Natural killer cell (primary cell): ENCODE measurements at regions of chr16 and their contacts with region 1.

Region 1: GRCh38 chr16:89490387-89491237 is at the start of gene ANKRD11:
- DNase-seq: peak; percentile 98 to 100
- ATAC-seq: peak; percentile 84 to 95 (median 86)
- H3K4me3 ChIP-seq: peak within 1 kb of the TSS; percentile 51
- H3K4me3 Mint-ChIP-seq: peak within 1 kb of the TSS; percentile 95
- H3K27ac ChIP-seq: peak within 1 kb of the TSS; percentile 78
- H3K27ac Mint-ChIP-seq: peak within 1 kb of the TSS; percentile 97 to 98
- H3K4me1 ChIP-seq: peaks cover 42% of the 10 kb centered on the region
- H3K4me1 Mint-ChIP-seq: peaks cover 41 to 72% of the 10 kb centered on the region in 2 donors
- H3K27me3 ChIP-seq: no peaks in the 10 kb centered on the region
- H3K27me3 Mint-ChIP-seq: no peaks in the 10 kb centered on the region
- CTCF ChIP-seq: no peak
- total RNA-seq, gene ANKRD11: 230 to 299 (median 287) TPM

Region 2: DNA sequence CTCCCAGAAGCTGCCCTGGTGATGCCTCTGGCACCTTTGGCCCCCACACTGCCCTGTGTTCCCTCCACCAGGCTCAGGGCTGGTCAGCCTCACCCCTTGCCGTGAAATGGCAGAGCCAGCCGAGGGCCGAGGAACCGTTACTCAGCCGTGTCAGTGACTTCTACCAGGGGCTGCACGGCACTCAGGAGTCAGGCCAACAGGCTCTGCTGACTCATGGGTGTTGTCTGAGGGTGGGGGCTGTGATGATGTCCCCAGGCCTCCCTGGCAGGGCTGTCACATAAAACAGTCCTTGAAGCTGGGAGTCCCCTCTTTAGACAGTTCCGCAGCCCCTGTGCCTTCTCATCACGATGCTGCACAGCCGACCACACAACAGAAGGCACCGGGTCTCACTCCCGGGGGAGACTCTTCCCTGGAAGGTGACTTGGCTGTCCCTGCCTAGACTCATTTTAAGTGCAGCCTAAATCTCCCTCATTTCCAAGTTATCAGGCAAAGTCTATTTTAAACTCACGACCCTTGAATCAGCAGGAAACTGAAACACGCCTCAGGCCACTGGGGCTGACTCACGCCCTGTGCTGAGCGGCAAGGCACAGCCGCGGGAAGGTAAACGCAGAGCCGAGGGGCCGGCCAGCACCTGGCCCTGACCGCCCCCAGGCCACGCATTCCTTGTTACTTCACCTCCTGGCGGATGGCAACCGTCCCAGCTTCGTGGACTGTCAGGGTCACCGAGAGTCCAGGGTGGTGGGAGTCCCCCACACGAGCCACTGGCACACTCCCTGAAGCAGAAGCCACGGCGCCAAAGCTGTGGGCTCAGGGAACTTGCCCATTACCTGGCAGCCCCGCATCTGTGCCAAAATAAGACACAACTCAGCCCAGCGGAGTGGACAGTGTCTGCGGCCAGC is 170.5 kb before region 1 on chr16:
- intact Hi-C with region 1: loop called (anchors 2 kb)
- DNase-seq: peak in 1 of 2 donors; percentile 49
- ATAC-seq: peak in 2 of 3 donors; percentile 24 to 36
- H3K4me3 ChIP-seq: no peak overlapping the region
- H3K4me3 Mint-ChIP-seq: peak overlapping the region; percentile 80
- H3K27ac ChIP-seq: no peak overlapping the region
- H3K27ac Mint-ChIP-seq: peak overlapping the region; percentile 70 to 98
- H3K4me1 ChIP-seq: peaks cover 97% of the 10 kb centered on the region
- H3K4me1 Mint-ChIP-seq: peaks cover 79 to 85% of the 10 kb centered on the region in 2 donors
- H3K27me3 ChIP-seq: no peaks in the 10 kb centered on the region
- H3K27me3 Mint-ChIP-seq: no peaks in the 10 kb centered on the region
- CTCF ChIP-seq: no peak

Region 3: DNA sequence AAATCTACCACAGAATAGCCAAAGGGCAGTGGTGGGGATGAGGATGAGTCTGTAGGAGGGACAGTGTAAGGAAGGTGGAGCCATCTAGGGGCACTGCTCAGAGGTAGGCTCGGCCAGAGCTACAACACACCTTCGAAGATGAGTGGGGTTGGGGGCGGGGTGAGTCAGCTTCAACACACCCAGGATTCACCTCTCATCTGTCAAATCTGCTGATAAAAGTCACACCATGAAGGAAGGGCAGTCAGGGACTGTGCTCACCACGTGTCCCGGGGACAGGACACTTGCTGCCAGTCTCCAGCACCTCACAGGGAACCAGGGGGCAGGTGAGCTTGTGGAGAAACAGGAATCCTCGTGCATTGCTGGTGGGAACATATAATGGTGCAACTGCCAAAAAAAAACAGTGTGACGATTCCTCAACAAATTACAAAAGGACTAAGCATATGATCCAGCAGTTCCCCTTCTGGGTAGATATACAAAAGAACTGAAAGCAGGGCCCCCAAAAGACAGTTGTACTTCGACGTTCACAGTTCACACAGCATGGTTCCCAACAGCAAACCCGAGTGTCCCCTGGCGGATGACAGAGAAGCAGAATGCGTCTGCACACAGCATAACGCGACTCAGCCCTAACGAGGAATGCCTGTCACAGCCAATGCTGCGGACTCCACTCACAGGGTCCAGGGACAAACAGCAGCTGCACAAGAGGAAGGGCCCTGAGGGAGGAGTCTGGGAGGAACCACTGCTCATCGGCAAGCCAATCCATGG is 133.4 kb before region 1 on chr16:
- intact Hi-C with region 1: loop called (anchors 1 kb)
- DNase-seq: peak in 1 of 2 donors; percentile 47
- ATAC-seq: peak in 2 of 3 donors; percentile 13 to 22
- H3K4me3 ChIP-seq: no peak overlapping the region
- H3K4me3 Mint-ChIP-seq: peak overlapping the region; percentile 87
- H3K27ac ChIP-seq: peak overlapping the region; percentile 10
- H3K27ac Mint-ChIP-seq: peak overlapping the region; percentile 82 to 83
- H3K4me1 ChIP-seq: peaks cover 98% of the 10 kb centered on the region
- H3K4me1 Mint-ChIP-seq: peaks cover 77 to 92% of the 10 kb centered on the region in 2 donors
- H3K27me3 ChIP-seq: no peaks in the 10 kb centered on the region
- H3K27me3 Mint-ChIP-seq: no peaks in the 10 kb centered on the region
- CTCF ChIP-seq: no peak

Region 4: DNA sequence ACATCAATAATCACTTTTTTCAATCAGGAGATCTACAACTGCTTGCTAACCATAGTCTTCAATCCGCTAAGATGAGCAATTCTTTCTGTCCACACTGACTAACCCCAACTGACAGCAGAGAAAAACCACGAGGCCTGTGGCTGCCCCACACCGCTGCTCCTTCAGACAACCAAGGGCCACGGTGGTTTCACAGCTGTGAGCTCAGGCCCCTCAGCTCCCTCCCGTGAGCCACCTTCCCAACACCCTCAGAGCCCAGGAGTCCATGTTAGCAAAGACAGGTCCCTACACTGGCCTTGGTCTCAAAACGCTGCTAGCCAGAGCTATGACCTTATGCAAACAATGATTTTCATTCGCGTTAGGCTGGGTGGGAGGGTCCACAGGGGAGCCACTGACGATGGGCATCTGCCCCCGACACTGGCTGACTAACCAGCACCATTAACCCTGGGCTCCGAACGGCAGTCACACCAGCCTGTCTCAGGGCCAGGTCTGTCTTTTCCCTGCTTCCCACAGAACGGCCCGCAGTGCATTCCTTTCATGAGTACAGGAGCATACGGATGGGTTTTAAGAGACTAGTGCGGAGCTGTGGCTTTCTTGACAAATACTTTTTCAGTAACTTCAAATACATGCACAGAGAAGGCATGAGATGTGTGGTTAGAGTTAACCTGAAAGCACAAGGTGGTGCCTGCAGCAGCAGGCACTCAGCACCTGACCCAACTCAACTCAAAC is 67.5 kb before region 1 on chr16:
- intact Hi-C with region 1: loop called (anchors 2 kb)
- DNase-seq: peak; percentile 69 to 75
- ATAC-seq: peak; percentile 86 to 95 (median 91)
- H3K4me3 ChIP-seq: no peak overlapping the region
- H3K4me3 Mint-ChIP-seq: peak overlapping the region; percentile 70
- H3K27ac ChIP-seq: peak overlapping the region; percentile 22
- H3K27ac Mint-ChIP-seq: peak overlapping the region; percentile 76 to 86
- H3K4me1 ChIP-seq: peaks cover 81% of the 10 kb centered on the region
- H3K4me1 Mint-ChIP-seq: peaks cover 74 to 84% of the 10 kb centered on the region in 2 donors
- H3K27me3 ChIP-seq: no peaks in the 10 kb centered on the region
- H3K27me3 Mint-ChIP-seq: no peaks in the 10 kb centered on the region
- CTCF ChIP-seq: no peak

Region 5: GRCh38 chr16:89560378-89561141 is 69.9 kb after region 1 on chr16 and contains the start of gene RPL13:
- intact Hi-C with region 1: loop called (anchors 5 kb)
- DNase-seq: peak; percentile 90 to 96
- ATAC-seq: peak; percentile 93 to 98 (median 94)
- H3K4me3 ChIP-seq: peak within 1 kb of the TSS; percentile 90
- H3K4me3 Mint-ChIP-seq: peak within 1 kb of the TSS; percentile 99
- H3K27ac ChIP-seq: peak within 1 kb of the TSS; percentile 89
- H3K27ac Mint-ChIP-seq: peak within 1 kb of the TSS; percentile 90 to 98
- H3K4me1 ChIP-seq: peaks cover 39% of the 10 kb centered on the region
- H3K4me1 Mint-ChIP-seq: peaks cover 28 to 36% of the 10 kb centered on the region in 2 donors
- H3K27me3 ChIP-seq: no peaks in the 10 kb centered on the region
- H3K27me3 Mint-ChIP-seq: no peaks in the 10 kb centered on the region
- CTCF ChIP-seq: no peak
- total RNA-seq, gene RPL13: 1,286 to 1,549 (median 1,294) TPM